Naive thymus-derived CD4-positive, alpha-beta T cell (primary cell): ENCODE measurements at regions of chr7 and their contacts with region 1.

Region 1: DNA sequence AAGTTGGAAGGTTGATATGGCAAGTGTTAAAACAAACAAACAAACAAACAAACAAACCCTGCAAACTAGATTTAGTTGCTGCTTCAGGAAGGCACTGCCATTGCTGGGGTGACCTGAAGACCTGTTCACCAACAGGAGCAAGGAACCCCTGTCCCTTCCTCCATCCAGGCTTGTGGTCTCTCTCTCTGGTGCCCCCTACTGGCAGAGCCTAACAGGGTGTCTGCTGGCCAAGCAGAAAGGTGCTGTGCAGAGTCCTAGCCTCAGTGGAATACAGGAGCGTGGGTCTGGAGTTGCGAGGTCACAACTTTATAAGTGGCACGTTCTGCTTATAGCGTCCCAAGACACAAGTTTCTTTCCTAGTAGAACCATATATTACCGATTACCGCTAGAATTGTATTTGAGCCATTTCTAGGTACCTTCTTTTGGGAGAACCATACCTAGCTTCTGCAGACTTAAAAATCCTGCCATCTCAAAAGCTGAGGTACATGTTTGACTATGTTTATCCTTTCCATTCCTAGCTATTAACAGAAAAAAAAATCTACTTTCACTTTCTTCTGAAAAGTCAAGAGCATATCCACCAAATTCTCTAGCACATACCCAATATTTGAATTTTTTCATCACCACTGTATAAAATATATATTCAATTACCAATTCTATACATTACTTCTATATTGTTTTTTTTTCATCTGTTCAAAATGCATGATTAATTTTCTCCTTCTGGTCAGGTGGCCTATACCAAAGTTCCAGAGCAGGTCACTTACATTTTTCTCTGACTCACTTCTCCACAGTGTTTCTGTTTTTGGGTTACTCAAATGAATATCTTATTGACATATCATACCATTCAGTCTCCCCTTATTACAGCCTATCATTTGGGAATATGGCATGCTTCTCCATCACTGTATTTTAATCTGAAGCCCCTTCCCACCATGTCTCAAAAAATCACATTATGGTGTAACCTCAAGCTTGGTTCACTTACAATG is 29.1 kb upstream of the CALD1 start:
- DNase-seq: peak; percentile 26 to 68 (median 49)
- ATAC-seq: peak; percentile 87
- H3K4me3 ChIP-seq: no peak overlapping the region
- H3K4me3 Mint-ChIP-seq: no peak overlapping the region
- H3K27ac ChIP-seq: no peak overlapping the region
- H3K27ac Mint-ChIP-seq: no peak overlapping the region
- H3K4me1 ChIP-seq: no peaks in the 10 kb centered on the region
- H3K4me1 Mint-ChIP-seq: peaks cover 0 to 10% (median 0%) of the 10 kb centered on the region in 7 donors
- H3K27me3 ChIP-seq: no peaks in the 10 kb centered on the region
- H3K27me3 Mint-ChIP-seq: no peaks in the 10 kb centered on the region

Region 2: GRCh38 chr7:134394046-134394445 is 356.3 kb before region 1 on chr7:
- CTCF ChIA-PET with region 1: no interaction called
- POLR2A ChIA-PET with region 1: no interaction called
- intact Hi-C with region 1: no loop called
- DNase-seq: no peak
- ATAC-seq: no peak
- H3K4me3 ChIP-seq: no peak overlapping the region
- H3K4me3 Mint-ChIP-seq: no peak overlapping the region
- H3K27ac ChIP-seq: no peak overlapping the region
- H3K27ac Mint-ChIP-seq: no peak overlapping the region
- H3K4me1 ChIP-seq: no peaks in the 10 kb centered on the region
- H3K4me1 Mint-ChIP-seq: no peaks in the 10 kb centered on the region
- H3K27me3 ChIP-seq: no peaks in the 10 kb centered on the region
- H3K27me3 Mint-ChIP-seq: peaks cover 0 to 21% (median 12%) of the 10 kb centered on the region in 5 donors

Region 3: DNA sequence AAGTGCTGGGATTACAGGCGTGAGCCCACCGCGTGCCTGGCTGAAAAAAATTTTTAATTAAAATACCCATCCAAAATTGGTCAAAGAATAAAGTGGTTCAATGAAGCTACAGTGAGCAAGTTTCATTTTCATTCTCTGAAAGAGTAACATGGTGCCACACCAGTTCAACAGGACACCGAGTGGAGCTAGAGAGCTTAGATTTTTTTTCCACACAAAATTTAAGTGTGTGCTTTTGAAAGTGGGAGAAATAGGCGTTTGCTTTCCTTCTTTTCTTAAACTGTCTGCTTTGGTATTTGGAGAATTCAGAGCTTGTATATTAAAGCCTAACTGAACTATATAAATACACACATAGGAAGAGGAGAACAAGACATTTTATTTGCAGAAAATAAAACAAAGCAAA is 60.4 kb before region 1 on chr7:
- CTCF ChIA-PET with region 1: interaction called, 5 read pairs
- POLR2A ChIA-PET with region 1: no interaction called
- intact Hi-C with region 1: loop called in 1 of 2 experiments (anchors 1 kb)
- DNase-seq: peak in 1 of 9 donors; percentile 12
- ATAC-seq: no peak
- H3K4me3 ChIP-seq: no peak overlapping the region
- H3K4me3 Mint-ChIP-seq: no peak overlapping the region
- H3K27ac ChIP-seq: no peak overlapping the region
- H3K27ac Mint-ChIP-seq: peak overlapping the region in 6 of 9 donors; percentile 10 to 43 (median 34)
- H3K4me1 ChIP-seq: peaks cover 0 to 5% of the 10 kb centered on the region in 2 donors
- H3K4me1 Mint-ChIP-seq: peaks cover 6 to 26% (median 14%) of the 10 kb centered on the region in 7 donors
- H3K27me3 ChIP-seq: no peaks in the 10 kb centered on the region
- H3K27me3 Mint-ChIP-seq: peaks cover 0 to 7% (median 0%) of the 10 kb centered on the region in 5 donors

Region 4: DNA sequence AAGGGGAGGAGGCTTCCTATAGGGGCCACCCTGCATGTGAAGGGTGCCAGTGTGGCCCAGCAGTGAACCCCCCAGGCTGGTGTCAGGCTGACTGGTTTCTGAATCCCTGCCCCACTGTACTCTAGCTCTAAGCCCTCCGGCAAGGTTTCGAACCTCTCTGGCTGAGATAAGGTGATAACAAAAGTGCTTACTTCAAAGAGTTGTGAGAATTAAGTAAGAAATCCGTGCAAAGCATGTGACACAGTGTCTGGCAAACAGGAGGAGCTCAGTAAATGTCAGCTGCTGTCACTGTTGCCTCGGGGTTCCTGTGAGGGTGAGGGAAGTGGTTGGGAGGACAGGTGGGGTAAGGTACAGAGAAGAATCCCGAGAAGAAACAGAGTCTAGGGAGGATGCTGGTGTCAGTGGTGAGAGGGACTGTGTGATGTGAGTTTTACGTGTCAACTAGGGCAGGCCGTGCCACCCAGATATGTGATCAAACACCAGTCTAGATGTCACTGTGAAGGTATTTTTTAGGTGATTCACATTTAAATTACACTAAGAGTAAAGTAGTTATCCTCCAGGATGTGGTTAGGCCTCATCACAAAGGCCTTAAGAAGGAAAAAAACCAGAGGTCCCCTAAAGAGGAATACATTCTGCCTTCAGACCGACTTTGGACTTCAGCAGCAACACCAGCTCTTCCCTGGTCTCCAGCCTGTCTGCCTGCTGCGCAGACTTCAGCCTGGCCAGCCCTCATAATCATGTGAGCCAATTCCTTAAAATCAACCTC is 39.3 kb before region 1 on chr7:
- CTCF ChIA-PET with region 1: interaction called, 7 read pairs
- POLR2A ChIA-PET with region 1: no interaction called
- intact Hi-C with region 1: loop called (anchors 5 kb)
- DNase-seq: peak; percentile 15 to 92 (median 88)
- ATAC-seq: peak; percentile 96
- H3K4me3 ChIP-seq: peak overlapping the region; percentile 15
- H3K4me3 Mint-ChIP-seq: peak overlapping the region; percentile 32 to 77 (median 66)
- H3K27ac ChIP-seq: peak overlapping the region; percentile 77
- H3K27ac Mint-ChIP-seq: peak overlapping the region; percentile 86 to 99 (median 94)
- H3K4me1 ChIP-seq: peaks cover 10 to 15% of the 10 kb centered on the region in 2 donors
- H3K4me1 Mint-ChIP-seq: peaks cover 11 to 32% (median 22%) of the 10 kb centered on the region in 7 donors
- H3K27me3 ChIP-seq: no peaks in the 10 kb centered on the region
- H3K27me3 Mint-ChIP-seq: no peaks in the 10 kb centered on the region

Region 5: GRCh38 chr7:134831862-134832261 is 81.5 kb after region 1 on chr7:
- CTCF ChIA-PET with region 1: no interaction called
- POLR2A ChIA-PET with region 1: no interaction called
- intact Hi-C with region 1: no loop called
- DNase-seq: peak in 1 of 9 donors; percentile 13
- ATAC-seq: no peak
- H3K4me3 ChIP-seq: no peak overlapping the region
- H3K4me3 Mint-ChIP-seq: peak overlapping the region in 7 of 10 donors; percentile 0 to 78 (median 49)
- H3K27ac ChIP-seq: no peak overlapping the region
- H3K27ac Mint-ChIP-seq: peak overlapping the region in 4 of 9 donors; percentile 17 to 53 (median 24)
- H3K4me1 ChIP-seq: no peaks in the 10 kb centered on the region
- H3K4me1 Mint-ChIP-seq: no peaks in the 10 kb centered on the region
- H3K27me3 ChIP-seq: no peaks in the 10 kb centered on the region
- H3K27me3 Mint-ChIP-seq: no peaks in the 10 kb centered on the region

Region 6: DNA sequence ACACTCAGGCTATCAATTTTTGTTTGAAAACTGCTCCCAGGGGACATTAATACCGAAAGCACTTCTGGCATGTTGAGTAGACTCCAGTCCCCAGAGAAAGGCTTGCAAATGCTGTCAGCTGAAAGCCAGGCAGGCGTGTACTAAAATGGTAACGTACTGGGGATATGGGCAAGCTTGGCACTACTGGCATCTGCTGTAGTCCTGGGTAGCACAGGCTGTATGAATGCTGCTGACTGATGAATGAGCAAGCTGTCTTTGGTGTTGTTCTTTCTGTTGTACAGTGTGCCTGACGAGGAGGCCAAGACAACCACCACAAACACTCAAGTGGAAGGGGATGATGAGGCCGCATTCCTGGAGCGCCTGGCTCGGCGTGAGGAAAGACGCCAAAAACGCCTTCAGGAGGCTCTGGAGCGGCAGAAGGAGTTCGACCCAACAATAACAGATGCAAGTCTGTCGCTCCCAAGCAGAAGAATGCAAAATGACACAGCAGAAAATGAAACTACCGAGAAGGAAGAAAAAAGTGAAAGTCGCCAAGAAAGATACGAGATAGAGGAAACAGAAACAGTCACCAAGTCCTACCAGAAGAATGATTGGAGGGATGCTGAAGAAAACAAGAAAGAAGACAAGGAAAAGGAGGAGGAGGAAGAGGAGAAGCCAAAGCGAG is 182.5 kb after region 1 on chr7:
- CTCF ChIA-PET with region 1: no interaction called
- POLR2A ChIA-PET with region 1: no interaction called
- intact Hi-C with region 1: no loop called
- DNase-seq: no peak
- ATAC-seq: no peak
- H3K4me3 ChIP-seq: no peak overlapping the region
- H3K4me3 Mint-ChIP-seq: peak overlapping the region in 9 of 10 donors; percentile 24 to 79 (median 61)
- H3K27ac ChIP-seq: no peak overlapping the region
- H3K27ac Mint-ChIP-seq: peak overlapping the region in 6 of 9 donors; percentile 9 to 51 (median 37)
- H3K4me1 ChIP-seq: no peaks in the 10 kb centered on the region
- H3K4me1 Mint-ChIP-seq: peaks cover 7 to 16% (median 13%) of the 10 kb centered on the region in 7 donors
- H3K27me3 ChIP-seq: no peaks in the 10 kb centered on the region
- H3K27me3 Mint-ChIP-seq: peaks cover 0 to 2% (median 0%) of the 10 kb centered on the region in 5 donors